Activated T-helper 1 cell treated with anti-CD3 and anti-CD28 coated beads, Interleukin-12 subunit alpha, Interleukin-12 subunit beta, Interleukin-2, Interleukin-4 antibody, amounts not matched to agents 30 ng/mL and 10 ng/mL and 1 ng/mL, durations not matched to agents 14 hours and 24 hours and 36 hours (primary cell): ENCODE measurements at regions of chr17 and their contacts with region 1.

Region 1: DNA sequence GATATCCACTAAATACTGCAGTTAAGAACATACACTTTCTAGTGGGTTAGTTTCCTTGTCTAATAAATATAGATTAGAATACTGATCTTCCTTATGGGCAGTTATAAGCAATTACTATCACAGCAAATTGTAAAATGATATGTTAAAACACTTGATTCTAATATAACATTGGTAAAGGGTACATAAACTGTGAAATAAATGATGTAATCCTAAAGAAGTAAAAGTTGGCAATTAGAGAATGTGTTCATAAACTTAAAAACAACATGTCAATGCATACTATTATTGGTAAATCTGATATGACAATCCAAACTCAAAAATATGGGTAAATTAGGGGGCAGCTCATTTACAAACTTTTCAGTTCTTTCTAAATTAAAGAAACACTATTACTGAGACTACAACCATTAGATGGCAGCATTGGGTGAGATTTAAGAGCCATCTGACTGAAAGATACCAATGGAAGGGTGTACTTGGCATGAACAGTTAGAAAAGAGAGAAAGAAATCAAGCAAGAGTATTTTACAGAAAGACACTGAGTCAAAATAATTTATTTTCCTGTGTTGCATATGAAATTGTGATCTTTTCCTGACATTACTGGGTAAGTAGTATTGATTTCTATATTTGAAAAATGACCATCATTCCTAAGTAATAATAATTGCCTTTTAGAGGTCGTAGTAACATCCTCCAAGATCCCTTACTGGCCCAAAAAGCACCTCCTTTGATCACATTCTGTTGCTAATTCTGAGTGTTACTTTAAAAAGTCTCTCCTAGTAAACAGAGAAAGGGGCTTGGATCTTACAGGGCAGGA is 119.6 kb downstream of the SPAG9 start:
- DNase-seq: no peak
- H3K4me3 Mint-ChIP-seq: no peak overlapping the region
- H3K27ac Mint-ChIP-seq: no peak overlapping the region
- H3K4me1 Mint-ChIP-seq: peaks cover 7% of the 10 kb centered on the region
- H3K27me3 Mint-ChIP-seq: no peaks in the 10 kb centered on the region

Region 2: GRCh38 chr17:50986989-50987660 is 13.9 kb before region 1 on chr17:
- intact Hi-C with region 1: no loop called
- DNase-seq: no peak
- H3K4me3 Mint-ChIP-seq: no peak overlapping the region
- H3K27ac Mint-ChIP-seq: no peak overlapping the region
- H3K4me1 Mint-ChIP-seq: no peaks in the 10 kb centered on the region
- H3K27me3 Mint-ChIP-seq: no peaks in the 10 kb centered on the region

Region 3: GRCh38 chr17:51056813-51057510 is 55.9 kb after region 1 on chr17:
- intact Hi-C with region 1: loop called (anchors 1 kb)
- DNase-seq: no peak
- H3K4me3 Mint-ChIP-seq: no peak overlapping the region
- H3K27ac Mint-ChIP-seq: no peak overlapping the region
- H3K4me1 Mint-ChIP-seq: peaks cover 7% of the 10 kb centered on the region
- H3K27me3 Mint-ChIP-seq: no peaks in the 10 kb centered on the region

Region 4: DNA sequence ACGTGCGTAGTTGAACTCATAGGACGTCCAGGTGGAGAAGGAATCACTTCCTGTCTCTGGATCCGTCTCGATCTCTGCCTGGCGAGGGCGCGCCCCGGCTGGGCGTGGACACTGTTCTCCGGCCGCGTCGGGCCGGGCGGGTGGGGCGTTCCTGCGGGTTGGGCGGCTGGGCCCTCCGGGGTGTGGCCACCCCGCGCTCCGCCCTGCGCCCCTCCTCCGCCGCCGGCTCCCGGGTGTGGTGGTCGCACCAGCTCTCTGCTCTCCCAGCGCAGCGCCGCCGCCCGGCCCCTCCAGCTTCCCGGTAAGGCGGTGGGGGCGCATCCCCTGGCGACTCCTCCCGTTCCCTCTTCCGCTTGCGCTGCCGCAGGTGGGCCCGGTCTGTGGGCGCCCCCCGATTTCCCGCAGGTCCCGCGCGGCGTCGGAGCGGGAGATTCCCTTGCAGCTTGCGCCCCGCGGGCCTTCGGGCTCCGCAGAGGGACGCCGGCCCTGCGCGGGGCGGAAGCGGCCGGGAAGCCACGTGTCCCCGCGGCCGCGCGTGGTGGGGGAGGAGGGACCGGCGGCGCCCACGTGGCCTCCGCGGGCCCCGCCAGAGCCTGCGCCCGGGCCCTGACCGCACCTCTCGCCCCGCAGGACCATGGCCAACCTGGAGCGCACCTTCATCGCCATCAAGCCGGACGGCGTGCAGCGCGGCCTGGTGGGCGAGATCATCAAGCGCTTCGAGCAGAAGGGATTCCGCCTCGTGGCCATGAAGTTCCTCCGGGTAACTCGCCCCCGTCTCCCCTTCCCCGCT is 165.4 kb after region 1 on chr17 and contains the start of gene NME2:
- intact Hi-C with region 1: loop called (anchors 1 kb)
- DNase-seq: peak; percentile 69
- H3K4me3 Mint-ChIP-seq: peak within 1 kb of the TSS; percentile 98
- H3K27ac Mint-ChIP-seq: peak within 1 kb of the TSS; percentile 98
- H3K4me1 Mint-ChIP-seq: peaks cover 32% of the 10 kb centered on the region
- H3K27me3 Mint-ChIP-seq: peaks cover 1% of the 10 kb centered on the region
- total RNA-seq, gene NME2: 664 and 674 TPM in 2 replicates